ENCODE measurements at regions of chr2 and their contacts with region 1.

Region 1: DNA sequence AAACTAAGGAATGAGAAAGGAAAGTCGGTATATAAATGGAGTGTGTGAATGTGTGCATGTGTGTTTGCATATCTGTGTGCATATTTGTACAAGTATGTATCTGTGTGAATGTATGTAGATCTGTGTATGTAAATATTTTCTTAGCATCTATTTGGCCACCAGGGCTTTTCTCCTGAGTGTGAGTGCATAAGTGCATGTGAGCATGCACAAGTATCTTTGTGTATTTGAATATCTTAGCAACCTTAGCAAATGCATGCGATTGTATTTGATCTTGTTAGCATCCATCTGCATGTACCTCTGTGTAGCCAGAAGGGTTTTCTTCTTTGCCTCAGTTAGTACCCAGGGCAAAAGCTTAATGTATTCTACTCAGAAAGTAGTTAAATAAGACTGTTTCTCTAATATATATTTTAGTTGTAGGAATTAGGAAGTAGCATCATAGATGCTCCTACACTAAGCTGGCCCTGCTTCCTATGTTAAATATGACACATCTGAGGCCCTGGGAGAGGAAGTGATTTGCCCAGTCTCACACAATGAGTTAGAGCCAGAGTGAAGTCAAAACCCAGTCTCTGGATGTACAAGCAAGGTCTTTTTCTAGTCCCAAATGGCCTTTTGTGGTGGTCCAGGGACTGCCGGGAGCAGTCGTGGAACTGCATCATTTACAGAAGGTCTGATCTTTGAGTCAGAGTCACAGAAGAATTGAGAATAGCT is 9.2 kb downstream of the FKBP1B start:
- DNase-seq: no peak
- ATAC-seq: no peak
- H3K4me3 ChIP-seq: no peak overlapping the region
- H3K27ac ChIP-seq: no peak overlapping the region
- H3K4me1 ChIP-seq: no peaks in the 10 kb centered on the region
- H3K27me3 ChIP-seq: no peaks in the 10 kb centered on the region
- CTCF ChIP-seq: no peak

Region 2: DNA sequence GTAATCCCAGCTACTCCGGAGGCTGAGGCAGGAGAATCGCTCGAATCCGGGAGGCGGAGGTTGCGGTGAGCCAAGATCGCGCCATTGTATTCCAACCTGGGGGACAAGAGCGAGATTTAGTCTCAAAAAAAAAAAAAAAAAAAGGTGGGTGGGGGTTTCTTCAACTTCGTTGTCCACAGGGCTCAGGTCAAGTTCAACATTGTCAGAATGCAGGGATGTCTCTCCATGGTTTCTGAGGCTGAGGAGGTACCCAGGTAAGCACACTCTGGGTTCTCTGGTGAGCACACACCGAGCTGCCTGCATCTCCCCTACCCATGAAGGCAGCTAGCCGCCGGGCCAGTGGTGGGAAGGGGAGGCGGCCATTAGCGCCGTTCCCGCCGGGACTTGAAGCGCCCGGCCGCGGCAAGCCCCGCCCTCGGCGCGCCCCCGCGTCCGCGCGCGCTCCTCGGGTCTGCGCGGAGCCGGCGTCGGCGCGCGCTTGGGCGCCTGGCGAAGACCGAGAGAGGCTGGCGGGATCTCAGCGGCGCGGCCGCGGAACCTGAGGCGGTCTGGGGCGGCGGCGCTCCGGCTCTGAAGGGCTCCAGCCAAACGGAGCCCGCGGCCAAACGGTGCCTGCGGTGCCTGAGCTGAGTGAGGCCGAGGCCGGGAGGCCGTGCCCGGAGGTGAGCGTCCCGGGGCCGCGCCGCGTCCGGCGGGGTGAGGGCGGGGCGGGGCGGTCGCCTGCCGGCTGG is 118.6 kb before region 1 on chr2 and contains the start of gene UBXN2A:
- CTCF ChIA-PET with region 1: no interaction called
- POLR2A ChIA-PET with region 1: no interaction called
- intact Hi-C with region 1: no loop called
- DNase-seq: peak; percentile 87
- ATAC-seq: peak; percentile 73
- H3K4me3 ChIP-seq: peak within 1 kb of the TSS; percentile 90
- H3K27ac ChIP-seq: 0 out of 2 replicates have a peak within 1 kb of the TSS, but pooled peaks have one; percentile 5
- H3K4me1 ChIP-seq: peaks cover 10% of the 10 kb centered on the region; the same call in 1 of the 2 replicates
- H3K27me3 ChIP-seq: no peaks in the 10 kb centered on the region
- CTCF ChIP-seq: no peak
- total RNA-seq, gene UBXN2A: 14.2 and 15.4 TPM in 2 replicates

Region 3: GRCh38 chr2:23988371-23988770 is 70.3 kb before region 1 on chr2:
- CTCF ChIA-PET with region 1: no interaction called
- POLR2A ChIA-PET with region 1: no interaction called
- intact Hi-C with region 1: loop called (anchors 1 kb)
- DNase-seq: peak; percentile 62
- ATAC-seq: peak; percentile 88
- H3K4me3 ChIP-seq: no peak overlapping the region
- H3K27ac ChIP-seq: no peak overlapping the region
- H3K4me1 ChIP-seq: no peaks in the 10 kb centered on the region
- H3K27me3 ChIP-seq: no peaks in the 10 kb centered on the region
- CTCF ChIP-seq: peak; percentile 80